GM23248 (cell line): ENCODE measurements at regions of chr6 and their contacts with region 1.

Region 1: GRCh38 chr6:144215932-144216667 is 65.8 kb downstream of the STX11 start:
- DNase-seq: peak; percentile 96
- H3K4me3 ChIP-seq: peak overlapping the region; percentile 82
- H3K27ac ChIP-seq: peak overlapping the region; percentile 94
- H3K4me1 ChIP-seq: peaks cover 6% of the 10 kb centered on the region; the same call in 1 of the 2 replicates
- H3K27me3 ChIP-seq: no peaks in the 10 kb centered on the region

Region 2: GRCh38 chr6:144095331-144096002 is 120.6 kb before region 1 on chr6 and contains the start of gene SF3B5:
- in situ Hi-C with region 1: loop called (anchors 5 kb)
- DNase-seq: peak; percentile 100
- H3K4me3 ChIP-seq: peak within 1 kb of the TSS; percentile 95
- H3K27ac ChIP-seq: peak within 1 kb of the TSS; percentile 87
- H3K4me1 ChIP-seq: peaks cover 21% of the 10 kb centered on the region
- H3K27me3 ChIP-seq: no peaks in the 10 kb centered on the region
- total RNA-seq, gene SF3B5: 131 and 137 TPM in 2 replicates

Region 3: GRCh38 chr6:144726129-144726522 is 510.0 kb after region 1 on chr6:
- in situ Hi-C with region 1: no loop called
- DNase-seq: no peak
- H3K4me3 ChIP-seq: no peak overlapping the region
- H3K27ac ChIP-seq: no peak overlapping the region
- H3K4me1 ChIP-seq: peaks cover 13% of the 10 kb centered on the region
- H3K27me3 ChIP-seq: no peaks in the 10 kb centered on the region